ENCODE measurements at regions of chr12 and their contacts with region 1.

Region 1: DNA sequence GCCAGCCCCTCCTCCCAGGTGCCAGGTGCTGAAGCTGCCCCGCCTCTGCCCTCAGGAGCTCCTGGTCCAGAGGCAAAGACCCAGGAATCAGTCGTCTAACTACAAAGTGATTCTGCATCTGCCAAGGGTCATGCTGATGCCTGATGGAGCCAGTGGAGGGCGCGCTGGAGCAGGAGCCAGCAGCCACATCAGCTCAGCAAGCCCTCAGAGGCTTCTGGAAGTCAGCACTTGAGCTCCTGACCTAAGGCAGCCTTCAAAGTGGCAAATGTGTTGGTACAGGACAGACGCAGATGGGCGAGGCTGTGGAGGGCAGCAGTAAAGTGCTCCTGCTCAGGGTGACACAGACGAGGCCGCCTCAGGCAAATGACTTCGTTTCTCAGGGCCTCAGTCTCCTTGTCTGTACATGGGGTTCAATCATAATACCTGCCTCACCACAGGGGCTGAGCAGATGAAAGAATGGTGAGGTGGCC is 10.9 kb downstream of the C12orf43 start:
- DNase-seq: no peak
- ATAC-seq: no peak
- H3K4me3 ChIP-seq: no peak overlapping the region
- H3K27ac ChIP-seq: no peak overlapping the region
- H3K4me1 ChIP-seq: no peaks in the 10 kb centered on the region
- H3K27me3 ChIP-seq: no peaks in the 10 kb centered on the region
- CTCF ChIP-seq: peak in 10 of 12 donors; percentile 14 to 56 (median 40)
- POLR2A ChIP-seq: no peak

Region 2: DNA sequence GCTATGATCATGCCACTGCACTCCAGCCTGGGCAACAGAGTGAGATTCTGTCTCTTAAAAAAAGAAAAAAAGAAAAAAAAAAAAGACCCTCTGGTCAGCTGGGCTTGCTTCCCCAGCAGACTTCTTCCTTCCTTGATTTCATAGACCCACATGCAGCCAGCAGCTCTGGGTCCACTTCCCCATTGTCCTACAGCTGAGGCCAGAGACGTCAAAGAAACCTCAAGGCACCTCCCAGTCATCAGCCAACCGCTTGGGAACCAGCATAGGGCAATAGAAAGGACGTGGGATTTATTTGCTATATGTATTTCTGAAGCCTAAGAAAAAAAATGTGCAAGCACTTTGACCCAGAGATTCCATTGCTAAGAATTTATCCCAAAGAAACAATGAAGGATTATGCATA is 65.9 kb before region 1 on chr12:
- intact Hi-C with region 1: no loop called
- DNase-seq: peak; percentile 41 to 72 (median 54)
- ATAC-seq: peak; percentile 40 to 84 (median 66)
- H3K4me3 ChIP-seq: no peak overlapping the region
- H3K27ac ChIP-seq: peak overlapping the region in 1 of 12 donors; percentile 75
- H3K4me1 ChIP-seq: peaks cover 0 to 18% (median 0%) of the 10 kb centered on the region in 12 donors
- H3K27me3 ChIP-seq: peaks cover 0 to 4% (median 0%) of the 10 kb centered on the region in 9 donors
- CTCF ChIP-seq: no peak
- POLR2A ChIP-seq: no peak

Region 3: GRCh38 chr12:121095544-121096198 is 90.3 kb after region 1 on chr12:
- intact Hi-C with region 1: loop called in 1 of 10 experiments (anchors 10 kb)
- DNase-seq: peak; percentile 51 to 89 (median 72)
- ATAC-seq: peak; percentile 58 to 94 (median 88)
- H3K4me3 ChIP-seq: peak overlapping the region in 10 of 12 donors; percentile 28 to 55 (median 42)
- H3K27ac ChIP-seq: peak overlapping the region in 1 of 12 donors; percentile 46
- H3K4me1 ChIP-seq: peaks cover 0 to 20% (median 9%) of the 10 kb centered on the region in 12 donors
- H3K27me3 ChIP-seq: no peaks in the 10 kb centered on the region
- CTCF ChIP-seq: peak; percentile 75 to 92 (median 85)
- POLR2A ChIP-seq: no peak

Measured in heart left ventricle (tissue), 16 donors.